ENCODE measurements at regions of chr6 and their contacts with region 1.

Region 1: DNA sequence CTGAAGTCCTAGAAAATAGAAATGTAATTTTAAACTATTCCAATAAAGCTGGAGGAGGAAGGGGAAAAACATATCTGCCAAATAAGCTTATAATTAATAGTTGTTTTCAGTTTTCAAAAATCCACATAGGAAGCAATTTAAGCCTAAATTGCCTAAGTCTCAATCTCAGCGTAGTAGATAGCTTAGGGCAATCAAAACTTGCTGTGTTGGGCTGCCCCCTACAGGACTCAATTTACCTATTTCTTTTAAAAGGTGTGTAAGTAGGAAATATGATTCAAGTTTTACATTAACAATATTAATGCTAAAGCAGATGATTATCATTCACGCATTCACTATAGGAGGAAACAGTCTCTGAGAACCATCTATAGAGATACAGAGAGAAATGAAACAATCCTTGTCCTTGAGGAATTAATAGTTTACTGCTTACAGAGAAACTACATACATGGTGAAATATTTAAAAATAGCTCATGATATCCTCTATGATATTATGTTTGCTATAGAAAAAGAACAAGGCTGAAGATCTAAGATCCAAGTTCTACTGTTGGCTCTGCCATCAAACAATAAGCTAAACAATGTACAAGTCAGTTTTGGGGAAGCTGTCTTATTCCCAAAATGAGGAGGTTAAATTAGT is 102.1 kb downstream of the ATG5 start:
- DNase-seq: peak; percentile 51 to 87 (median 68)
- ATAC-seq: peak; percentile 88
- H3K4me3 ChIP-seq: no peak overlapping the region
- H3K4me3 Mint-ChIP-seq: no peak overlapping the region
- H3K27ac ChIP-seq: no peak overlapping the region
- H3K27ac Mint-ChIP-seq: peak overlapping the region; percentile 54
- H3K4me1 ChIP-seq: no peaks in the 10 kb centered on the region
- H3K4me1 Mint-ChIP-seq: peaks cover 17% of the 10 kb centered on the region
- H3K27me3 ChIP-seq: no peaks in the 10 kb centered on the region
- H3K27me3 Mint-ChIP-seq: no peaks in the 10 kb centered on the region
- CTCF ChIP-seq: peak; percentile 93

Region 2: DNA sequence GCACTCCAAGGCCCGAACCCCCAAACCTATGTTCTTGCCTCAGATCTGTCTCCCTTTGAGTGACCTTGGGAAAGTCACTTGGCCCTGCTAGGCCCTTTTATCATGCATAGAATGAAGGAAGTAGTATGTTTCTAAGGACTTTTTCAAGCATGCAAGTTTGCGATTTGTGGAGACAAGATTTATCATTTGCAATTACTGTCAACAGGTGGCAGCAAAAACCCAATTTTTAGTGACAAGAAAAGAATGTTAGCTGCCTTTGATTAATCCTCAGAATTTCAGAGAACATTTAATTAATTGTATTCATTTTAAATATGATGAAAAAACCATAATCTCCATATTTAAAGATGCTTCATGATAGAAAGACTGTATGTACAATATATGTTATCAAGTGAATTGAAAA is 792.2 kb before region 1 on chr6:
- CTCF ChIA-PET with region 1: no interaction called
- POLR2A ChIA-PET with region 1: no interaction called
- intact Hi-C with region 1: loop called (anchors 1 to 2 kb)
- DNase-seq: peak in 4 of 14 experiments; percentile 16 to 68 (median 62)
- ATAC-seq: no peak
- H3K4me3 ChIP-seq: no peak overlapping the region
- H3K4me3 Mint-ChIP-seq: no peak overlapping the region
- H3K27ac ChIP-seq: no peak overlapping the region
- H3K27ac Mint-ChIP-seq: no peak overlapping the region
- H3K4me1 ChIP-seq: no peaks in the 10 kb centered on the region
- H3K4me1 Mint-ChIP-seq: no peaks in the 10 kb centered on the region
- H3K27me3 ChIP-seq: peaks cover 0 to 5% of the 10 kb centered on the region in 2 experiments
- H3K27me3 Mint-ChIP-seq: peaks cover 10% of the 10 kb centered on the region
- CTCF ChIP-seq: peak; percentile 73

Region 3: GRCh38 chr6:105484238-105485161 is 738.9 kb before region 1 on chr6:
- CTCF ChIA-PET with region 1: no interaction called
- POLR2A ChIA-PET with region 1: no interaction called
- intact Hi-C with region 1: loop called (anchors 1 to 2 kb)
- DNase-seq: peak in 3 of 14 experiments; percentile 50 to 61 (median 56)
- ATAC-seq: peak; percentile 32
- H3K4me3 ChIP-seq: no peak overlapping the region
- H3K4me3 Mint-ChIP-seq: no peak overlapping the region
- H3K27ac ChIP-seq: no peak overlapping the region
- H3K27ac Mint-ChIP-seq: no peak overlapping the region
- H3K4me1 ChIP-seq: no peaks in the 10 kb centered on the region
- H3K4me1 Mint-ChIP-seq: peaks cover 5% of the 10 kb centered on the region
- H3K27me3 ChIP-seq: no peaks in the 10 kb centered on the region
- H3K27me3 Mint-ChIP-seq: peaks cover 20% of the 10 kb centered on the region
- CTCF ChIP-seq: peak; percentile 75

Region 4: DNA sequence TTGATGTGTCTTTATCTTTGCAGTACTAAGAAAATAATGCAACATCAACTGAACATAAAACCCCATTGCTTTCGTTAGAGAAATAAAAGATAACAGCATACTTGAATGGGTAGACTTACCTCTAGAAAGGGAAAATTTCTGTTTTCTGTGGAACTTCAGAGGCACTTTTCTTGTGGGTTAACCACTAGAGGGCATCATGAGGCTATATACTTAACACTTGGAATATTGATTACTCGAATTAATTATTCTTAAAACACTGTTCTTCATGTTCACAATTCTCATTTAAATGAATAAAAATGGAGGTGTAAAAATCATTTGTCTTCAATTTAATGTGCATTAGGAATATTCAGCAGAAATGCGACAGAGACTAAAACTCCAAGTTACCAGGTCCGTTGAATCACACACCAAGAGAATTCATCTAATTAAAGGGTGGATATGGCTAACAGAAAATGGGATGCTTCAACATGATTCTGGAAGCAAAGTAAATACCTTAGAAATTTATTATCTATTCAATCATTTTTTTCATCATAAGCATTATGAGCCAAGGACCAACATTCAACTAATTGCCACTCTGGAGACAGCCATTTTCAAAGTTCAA is 489.8 kb before region 1 on chr6:
- CTCF ChIA-PET with region 1: interaction called, 10 read pairs
- POLR2A ChIA-PET with region 1: interaction called, 3 read pairs
- intact Hi-C with region 1: loop called (anchors 1 kb)
- DNase-seq: peak in 3 of 14 experiments; percentile 56 to 68 (median 67)
- ATAC-seq: no peak
- H3K4me3 ChIP-seq: no peak overlapping the region
- H3K4me3 Mint-ChIP-seq: no peak overlapping the region
- H3K27ac ChIP-seq: no peak overlapping the region
- H3K27ac Mint-ChIP-seq: no peak overlapping the region
- H3K4me1 ChIP-seq: no peaks in the 10 kb centered on the region
- H3K4me1 Mint-ChIP-seq: peaks cover 13% of the 10 kb centered on the region
- H3K27me3 ChIP-seq: no peaks in the 10 kb centered on the region
- H3K27me3 Mint-ChIP-seq: no peaks in the 10 kb centered on the region
- CTCF ChIP-seq: peak; percentile 84

Region 5: GRCh38 chr6:105793130-105793529 is 430.3 kb before region 1 on chr6:
- CTCF ChIA-PET with region 1: no interaction called
- POLR2A ChIA-PET with region 1: no interaction called
- intact Hi-C with region 1: loop called in 1 of 2 experiments (anchors 2 kb)
- DNase-seq: peak in 5 of 14 experiments; percentile 8 to 64 (median 52)
- ATAC-seq: no peak
- H3K4me3 ChIP-seq: no peak overlapping the region
- H3K4me3 Mint-ChIP-seq: no peak overlapping the region
- H3K27ac ChIP-seq: no peak overlapping the region
- H3K27ac Mint-ChIP-seq: no peak overlapping the region
- H3K4me1 ChIP-seq: peaks cover 18% of the 10 kb centered on the region
- H3K4me1 Mint-ChIP-seq: peaks cover 16% of the 10 kb centered on the region
- H3K27me3 ChIP-seq: no peaks in the 10 kb centered on the region
- H3K27me3 Mint-ChIP-seq: peaks cover 5% of the 10 kb centered on the region
- CTCF ChIP-seq: peak; percentile 17

Region 6: DNA sequence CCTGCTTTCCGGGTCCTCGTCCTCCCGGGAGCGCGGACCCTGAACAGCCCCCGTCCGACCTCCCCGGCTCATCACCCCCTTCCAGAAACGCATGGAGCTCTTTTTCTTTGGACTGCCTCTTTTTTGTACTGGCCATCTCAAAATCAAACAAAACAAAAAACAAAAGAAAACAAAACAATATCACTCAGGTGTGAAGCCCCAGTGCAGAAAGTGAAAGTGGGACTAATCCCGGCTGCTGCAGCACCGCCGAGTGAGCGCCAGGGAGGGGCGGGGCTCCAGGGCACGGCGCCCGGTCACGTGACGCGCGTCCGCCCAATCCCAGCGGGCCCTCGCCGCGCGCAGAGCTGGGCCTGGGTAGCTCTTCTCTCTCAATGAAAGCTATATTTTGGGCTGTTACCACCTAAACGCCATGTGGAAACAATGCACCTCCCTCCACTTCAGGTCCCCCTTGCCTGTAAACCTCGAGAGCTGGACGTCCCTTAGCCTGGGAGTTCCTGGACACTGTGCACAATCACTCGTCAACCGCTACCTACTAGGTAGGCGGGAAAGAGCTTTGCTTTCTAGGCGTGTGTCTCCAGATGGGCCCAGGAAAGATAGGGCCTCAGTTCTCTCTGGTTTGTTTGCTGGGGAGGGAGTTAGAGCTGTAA is 231.0 kb before region 1 on chr6:
- CTCF ChIA-PET with region 1: interaction called, 9 read pairs
- POLR2A ChIA-PET with region 1: interaction called, 8 read pairs
- intact Hi-C with region 1: loop called (anchors 5 kb)
- DNase-seq: peak; percentile 76 to 96 (median 86)
- ATAC-seq: peak; percentile 89
- H3K4me3 ChIP-seq: peak overlapping the region; percentile 86
- H3K4me3 Mint-ChIP-seq: peak overlapping the region; percentile 92
- H3K27ac ChIP-seq: peak overlapping the region; percentile 66 to 71
- H3K27ac Mint-ChIP-seq: peak overlapping the region; percentile 83
- H3K4me1 ChIP-seq: peaks cover 41% of the 10 kb centered on the region
- H3K4me1 Mint-ChIP-seq: peaks cover 37% of the 10 kb centered on the region
- H3K27me3 ChIP-seq: peaks cover 14 to 54% of the 10 kb centered on the region in 2 experiments
- H3K27me3 Mint-ChIP-seq: peaks cover 87% of the 10 kb centered on the region
- CTCF ChIP-seq: no peak

Region 7: DNA sequence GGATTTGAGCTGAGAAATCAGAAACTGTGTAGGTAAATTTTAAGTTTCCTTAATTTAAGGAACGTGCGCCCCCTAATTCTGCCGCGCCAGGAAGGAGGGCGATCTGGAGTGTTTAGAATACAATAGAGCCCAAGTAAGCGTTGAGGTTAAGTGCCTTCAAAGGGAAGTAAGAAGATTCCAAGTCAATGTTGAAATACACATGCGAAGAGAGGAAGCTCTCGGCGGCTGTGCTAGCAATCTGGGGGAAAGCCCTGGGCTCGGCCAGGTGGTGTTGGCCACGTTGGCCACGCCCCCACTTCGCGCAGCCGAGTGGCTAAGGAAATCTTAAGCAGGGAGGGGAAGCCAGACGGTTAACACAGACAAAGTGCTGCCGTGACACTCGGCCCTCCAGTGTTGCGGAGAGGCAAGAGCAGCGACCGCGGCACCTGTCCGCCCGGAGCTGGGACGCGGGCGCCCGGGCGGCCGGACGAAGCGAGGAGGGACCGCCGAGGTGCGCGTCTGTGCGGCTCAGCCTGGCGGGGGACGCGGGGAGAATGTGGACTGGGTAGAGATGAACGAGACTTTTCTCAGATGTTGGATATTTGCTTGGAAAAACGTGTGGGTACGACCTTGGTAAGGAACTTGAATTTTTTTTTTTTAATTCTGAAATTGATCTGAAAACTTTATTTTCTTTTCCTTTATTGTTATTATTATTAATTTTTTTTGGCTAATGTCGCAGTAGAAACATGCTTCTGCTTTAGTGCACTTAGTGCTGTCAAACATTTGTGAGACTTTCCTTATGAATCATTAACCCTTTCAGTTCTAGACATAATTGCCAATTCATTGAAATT is 137.2 kb before region 1 on chr6 and contains the start of gene PRDM1:
- CTCF ChIA-PET with region 1: interaction called, 41 read pairs
- POLR2A ChIA-PET with region 1: interaction called, 17 read pairs
- intact Hi-C with region 1: loop called in 1 of 2 experiments (anchors 2 kb)
- DNase-seq: peak; percentile 53 to 96 (median 68)
- ATAC-seq: peak; percentile 83
- H3K4me3 ChIP-seq: peak within 1 kb of the TSS; percentile 62
- H3K4me3 Mint-ChIP-seq: peak within 1 kb of the TSS; percentile 94
- H3K27ac ChIP-seq: peak within 1 kb of the TSS in 1 of 2 donors; percentile 49
- H3K27ac Mint-ChIP-seq: peak within 1 kb of the TSS; percentile 74
- H3K4me1 ChIP-seq: peaks cover 58% of the 10 kb centered on the region
- H3K4me1 Mint-ChIP-seq: peaks cover 80% of the 10 kb centered on the region
- H3K27me3 ChIP-seq: peaks cover 0 to 8% of the 10 kb centered on the region in 2 experiments
- H3K27me3 Mint-ChIP-seq: peaks cover 55% of the 10 kb centered on the region
- CTCF ChIP-seq: peak; percentile 14
- total RNA-seq, gene PRDM1: 69.9 to 83.4 TPM

Region 8: DNA sequence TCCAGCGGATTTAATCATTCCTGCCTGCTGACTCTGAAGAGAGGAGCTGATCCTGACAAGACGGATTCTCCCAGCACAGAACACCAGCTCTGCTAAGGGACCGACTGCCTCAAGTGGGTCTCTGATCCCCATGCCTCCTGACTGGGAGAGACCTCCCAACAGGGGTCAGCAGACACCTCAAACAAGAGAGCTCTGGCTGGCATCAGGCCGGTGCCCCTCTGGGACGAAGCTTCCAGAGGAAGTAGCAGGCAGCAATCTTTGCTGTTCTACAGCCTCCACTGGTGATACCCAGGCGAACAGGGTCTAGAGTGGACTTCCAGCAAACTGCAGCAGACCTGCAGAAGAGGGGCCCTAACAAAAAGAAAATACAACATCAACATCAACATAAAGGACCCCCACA is 40.0 kb after region 1 on chr6:
- CTCF ChIA-PET with region 1: no interaction called
- POLR2A ChIA-PET with region 1: no interaction called
- intact Hi-C with region 1: no loop called
- DNase-seq: no peak
- ATAC-seq: no peak
- H3K4me3 ChIP-seq: no peak overlapping the region
- H3K4me3 Mint-ChIP-seq: no peak overlapping the region
- H3K27ac ChIP-seq: no peak overlapping the region
- H3K27ac Mint-ChIP-seq: no peak overlapping the region
- H3K4me1 ChIP-seq: no peaks in the 10 kb centered on the region
- H3K4me1 Mint-ChIP-seq: peaks cover 58% of the 10 kb centered on the region
- H3K27me3 ChIP-seq: no peaks in the 10 kb centered on the region
- H3K27me3 Mint-ChIP-seq: no peaks in the 10 kb centered on the region
- CTCF ChIP-seq: no peak